Heart left ventricle (tissue), 16 donors: ENCODE measurements at regions of chr2 and their contacts with region 1.

Region 1: GRCh38 chr2:15636972-15637785 is 45.5 kb downstream of the DDX1 start:
- DNase-seq: peak in 3 of 5 donors; percentile 67 to 73 (median 71)
- ATAC-seq: peak; percentile 63 to 86 (median 85)
- H3K4me3 ChIP-seq: no peak overlapping the region
- H3K27ac ChIP-seq: peak overlapping the region in 1 of 12 donors; percentile 8
- H3K4me1 ChIP-seq: peaks cover 8 to 61% (median 29%) of the 10 kb centered on the region in 12 donors
- H3K27me3 ChIP-seq: no peaks in the 10 kb centered on the region
- CTCF ChIP-seq: peak; percentile 67 to 97 (median 90)
- POLR2A ChIP-seq: no peak

Region 2: DNA sequence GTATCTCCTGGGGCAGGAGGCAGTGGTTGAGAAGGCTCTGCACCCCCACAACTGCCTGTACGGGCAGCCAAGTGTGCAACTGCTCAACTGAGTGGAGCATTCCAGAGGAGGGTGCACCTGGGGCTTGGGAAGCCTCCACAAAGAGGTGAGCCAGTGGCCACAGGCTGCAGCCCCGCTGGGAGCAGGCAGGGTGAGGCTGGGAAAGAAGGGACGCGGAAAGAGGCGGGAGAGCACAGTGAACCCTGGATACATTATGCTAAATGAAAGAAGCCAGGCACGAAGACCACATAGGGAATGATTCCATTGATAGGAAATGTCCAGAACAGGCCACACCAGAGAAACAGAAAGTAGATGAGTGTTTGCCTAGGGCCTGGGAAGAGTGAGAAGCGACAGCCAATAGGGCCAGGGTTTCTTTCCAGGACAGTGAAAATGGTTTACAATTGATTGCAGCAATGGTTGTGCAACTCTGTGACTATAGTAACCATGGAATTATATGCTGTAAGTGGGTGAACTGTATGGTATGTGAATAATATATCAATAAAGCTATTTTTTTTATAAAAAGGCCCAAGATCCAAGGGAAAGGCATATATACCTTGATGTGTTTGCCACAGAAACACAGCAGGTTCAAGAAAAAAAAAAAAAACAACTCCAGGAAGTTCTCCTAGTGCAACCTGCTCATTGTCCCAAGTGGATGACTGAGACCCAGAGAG is 36.9 kb after region 1 on chr2:
- intact Hi-C with region 1: no loop called
- DNase-seq: no peak
- ATAC-seq: no peak
- H3K4me3 ChIP-seq: no peak overlapping the region
- H3K27ac ChIP-seq: no peak overlapping the region
- H3K4me1 ChIP-seq: peaks cover 0 to 7% (median 0%) of the 10 kb centered on the region in 12 donors
- H3K27me3 ChIP-seq: peaks cover 0 to 5% (median 0%) of the 10 kb centered on the region in 9 donors
- CTCF ChIP-seq: no peak
- POLR2A ChIP-seq: no peak

Region 3: GRCh38 chr2:15730545-15731212 is 93.5 kb after region 1 on chr2:
- intact Hi-C with region 1: loop called in 3 of 10 experiments (anchors 5 to 10 kb)
- DNase-seq: peak; percentile 92 to 97 (median 97)
- ATAC-seq: peak; percentile 87 to 96 (median 92)
- H3K4me3 ChIP-seq: no peak overlapping the region
- H3K27ac ChIP-seq: peak overlapping the region in 8 of 12 donors; percentile 0 to 67 (median 32)
- H3K4me1 ChIP-seq: peaks cover 9 to 59% (median 42%) of the 10 kb centered on the region in 12 donors
- H3K27me3 ChIP-seq: no peaks in the 10 kb centered on the region
- CTCF ChIP-seq: no peak
- POLR2A ChIP-seq: no peak

Region 4: GRCh38 chr2:15912205-15912604 is 275.0 kb after region 1 on chr2:
- intact Hi-C with region 1: loop called in 2 of 10 experiments (anchors 5 to 10 kb)
- DNase-seq: peak; percentile 71 to 82 (median 78)
- ATAC-seq: peak; percentile 72 to 86 (median 81)
- H3K4me3 ChIP-seq: no peak overlapping the region
- H3K27ac ChIP-seq: peak overlapping the region in 3 of 12 donors; percentile 7 to 23 (median 19)
- H3K4me1 ChIP-seq: peaks cover 0 to 36% (median 24%) of the 10 kb centered on the region in 12 donors
- H3K27me3 ChIP-seq: no peaks in the 10 kb centered on the region
- CTCF ChIP-seq: no peak
- POLR2A ChIP-seq: no peak

Region 5: GRCh38 chr2:16000642-16001041 is 363.5 kb after region 1 on chr2:
- intact Hi-C with region 1: no loop called
- DNase-seq: no peak
- ATAC-seq: no peak
- H3K4me3 ChIP-seq: no peak overlapping the region
- H3K27ac ChIP-seq: no peak overlapping the region
- H3K4me1 ChIP-seq: no peaks in the 10 kb centered on the region
- H3K27me3 ChIP-seq: peaks cover 0 to 9% (median 0%) of the 10 kb centered on the region in 9 donors
- CTCF ChIP-seq: no peak
- POLR2A ChIP-seq: no peak

Region 6: DNA sequence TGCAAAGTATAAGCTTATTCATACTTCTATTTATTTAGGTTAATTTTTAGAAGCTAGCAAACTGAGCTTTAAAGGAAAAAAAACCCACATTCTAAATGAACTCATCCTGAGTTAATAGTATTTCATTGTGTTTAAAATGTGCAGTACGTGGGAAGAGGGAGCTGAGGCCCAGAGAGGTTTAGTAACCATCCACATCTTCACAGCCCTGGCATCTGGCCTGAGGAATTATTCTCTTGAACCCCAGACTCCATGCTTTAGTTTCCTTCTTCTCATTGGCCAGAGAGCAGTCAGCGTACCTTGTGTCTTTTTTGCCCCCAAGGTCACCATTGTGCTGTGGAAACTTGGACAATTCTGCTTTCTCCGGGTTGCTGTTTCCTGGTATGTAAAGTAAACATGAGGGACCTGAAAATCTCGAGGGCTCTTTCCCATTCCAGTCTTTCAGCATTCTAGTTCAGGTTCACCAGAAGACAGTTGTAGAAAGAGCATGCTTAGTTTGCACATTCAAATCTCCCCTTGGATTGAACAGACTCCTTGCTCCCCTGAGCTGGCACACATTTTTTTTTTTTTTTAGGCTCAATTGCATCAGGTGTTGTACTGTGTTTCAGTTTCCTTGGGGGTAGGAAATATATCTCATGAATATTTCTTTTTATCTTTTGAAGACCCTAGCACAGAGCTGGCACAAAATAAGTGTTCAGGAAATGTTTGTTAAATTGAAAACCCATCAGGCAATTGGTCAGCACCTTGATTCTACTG is 384.6 kb after region 1 on chr2:
- intact Hi-C with region 1: no loop called
- DNase-seq: no peak
- ATAC-seq: no peak
- H3K4me3 ChIP-seq: no peak overlapping the region
- H3K27ac ChIP-seq: no peak overlapping the region
- H3K4me1 ChIP-seq: no peaks in the 10 kb centered on the region
- H3K27me3 ChIP-seq: peaks cover 0 to 27% (median 3%) of the 10 kb centered on the region in 9 donors
- CTCF ChIP-seq: no peak
- POLR2A ChIP-seq: no peak

Region 7: DNA sequence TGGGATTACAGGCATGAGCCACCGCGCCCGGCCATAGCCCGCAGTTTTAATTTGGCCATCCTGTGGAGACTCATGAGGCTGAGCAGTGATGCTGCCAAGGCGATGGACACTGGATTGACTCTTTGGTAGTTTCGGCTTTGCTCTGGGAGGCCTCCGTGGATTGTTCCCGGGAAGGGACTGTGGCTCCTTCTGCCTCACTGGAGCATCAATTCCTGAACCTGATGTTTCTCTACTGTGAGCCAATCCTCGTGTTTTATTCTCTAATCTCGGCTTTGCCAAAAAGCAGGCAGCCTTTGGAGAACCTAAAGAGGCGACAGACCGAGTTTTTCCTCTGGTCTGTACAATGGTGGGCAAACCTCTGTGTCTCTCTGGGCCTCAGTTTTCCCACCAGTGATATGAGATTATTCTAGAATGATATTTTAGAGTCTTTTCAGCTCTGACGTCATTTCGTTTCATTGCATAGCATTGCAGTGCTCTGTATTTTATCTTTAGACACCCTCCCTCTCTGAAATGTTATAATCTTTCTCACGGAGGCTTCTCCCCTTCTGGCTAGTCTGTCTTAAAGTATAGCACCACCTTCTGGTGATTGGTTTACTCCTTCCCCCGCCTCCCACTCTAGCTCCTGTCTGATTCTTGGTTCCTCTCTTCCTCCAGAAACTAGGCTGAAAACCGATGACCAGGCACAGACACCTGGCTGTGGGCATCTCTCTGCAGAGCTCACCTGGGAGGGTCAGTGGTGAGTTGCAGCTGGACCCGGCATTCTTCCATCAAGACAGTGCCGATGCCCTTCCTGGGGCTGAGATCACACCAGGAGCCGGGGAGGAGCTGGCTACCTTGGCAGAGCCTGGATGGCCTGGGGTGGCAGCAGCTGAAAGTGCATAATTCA is 644.5 kb after region 1 on chr2:
- intact Hi-C with region 1: loop called (anchors 2 to 5 kb)
- DNase-seq: peak in 1 of 5 donors; percentile 15
- ATAC-seq: peak; percentile 42 to 77 (median 69)
- H3K4me3 ChIP-seq: no peak overlapping the region
- H3K27ac ChIP-seq: no peak overlapping the region
- H3K4me1 ChIP-seq: no peaks in the 10 kb centered on the region
- H3K27me3 ChIP-seq: no peaks in the 10 kb centered on the region
- CTCF ChIP-seq: peak; percentile 2 to 70 (median 55)
- POLR2A ChIP-seq: no peak

Region 8: DNA sequence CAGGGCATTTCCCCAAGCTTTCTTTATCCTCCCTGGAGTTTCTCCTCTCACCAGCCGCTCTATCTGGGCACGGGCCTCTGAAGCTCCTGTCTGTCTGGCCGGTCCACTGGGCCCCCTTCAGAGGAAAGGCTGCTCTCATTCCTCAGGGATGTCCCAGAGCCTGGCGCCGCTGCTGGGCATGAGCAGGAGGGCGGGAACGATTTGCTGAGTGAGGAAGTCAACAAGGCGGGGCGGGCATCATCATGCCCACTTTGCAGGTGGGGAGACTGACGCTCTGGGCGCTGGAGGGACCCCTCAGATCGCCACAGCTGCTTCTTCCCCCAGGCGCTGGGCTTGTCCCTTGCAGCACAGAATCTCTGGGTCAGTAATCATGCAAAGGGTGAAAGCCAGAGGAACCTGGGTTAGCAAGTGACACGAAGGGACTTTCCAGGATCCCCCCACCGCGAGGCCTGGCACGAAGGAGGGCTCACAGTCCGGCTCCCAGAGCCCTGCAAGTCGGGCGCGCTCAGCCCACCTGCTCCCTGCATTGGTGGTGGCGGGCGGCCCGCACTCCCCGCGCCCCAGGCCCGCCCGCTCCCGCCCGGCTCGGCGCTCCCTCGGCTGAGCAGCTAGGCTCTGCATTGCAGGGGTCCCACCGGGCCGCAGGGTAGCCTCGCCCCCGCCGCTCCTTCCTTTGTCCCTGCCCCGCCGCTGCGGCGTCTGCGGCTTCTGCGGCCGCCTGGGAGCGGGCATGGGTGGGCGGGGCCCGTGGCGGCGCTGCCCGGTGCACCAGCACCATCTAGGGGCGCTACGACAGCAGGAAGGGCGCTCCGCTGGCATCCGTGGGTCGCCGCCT is 870.7 kb after region 1 on chr2:
- intact Hi-C with region 1: loop called in 8 of 10 experiments (anchors 2 to 5 kb)
- DNase-seq: peak; percentile 11 to 67 (median 42)
- ATAC-seq: peak; percentile 47 to 94 (median 84)
- H3K4me3 ChIP-seq: peak overlapping the region; percentile 19 to 53 (median 43)
- H3K27ac ChIP-seq: no peak overlapping the region
- H3K4me1 ChIP-seq: peaks cover 0 to 10% (median 4%) of the 10 kb centered on the region in 12 donors
- H3K27me3 ChIP-seq: peaks cover 7 to 48% (median 19%) of the 10 kb centered on the region in 9 donors
- CTCF ChIP-seq: peak; percentile 34 to 70 (median 60)
- POLR2A ChIP-seq: no peak

Region 9: DNA sequence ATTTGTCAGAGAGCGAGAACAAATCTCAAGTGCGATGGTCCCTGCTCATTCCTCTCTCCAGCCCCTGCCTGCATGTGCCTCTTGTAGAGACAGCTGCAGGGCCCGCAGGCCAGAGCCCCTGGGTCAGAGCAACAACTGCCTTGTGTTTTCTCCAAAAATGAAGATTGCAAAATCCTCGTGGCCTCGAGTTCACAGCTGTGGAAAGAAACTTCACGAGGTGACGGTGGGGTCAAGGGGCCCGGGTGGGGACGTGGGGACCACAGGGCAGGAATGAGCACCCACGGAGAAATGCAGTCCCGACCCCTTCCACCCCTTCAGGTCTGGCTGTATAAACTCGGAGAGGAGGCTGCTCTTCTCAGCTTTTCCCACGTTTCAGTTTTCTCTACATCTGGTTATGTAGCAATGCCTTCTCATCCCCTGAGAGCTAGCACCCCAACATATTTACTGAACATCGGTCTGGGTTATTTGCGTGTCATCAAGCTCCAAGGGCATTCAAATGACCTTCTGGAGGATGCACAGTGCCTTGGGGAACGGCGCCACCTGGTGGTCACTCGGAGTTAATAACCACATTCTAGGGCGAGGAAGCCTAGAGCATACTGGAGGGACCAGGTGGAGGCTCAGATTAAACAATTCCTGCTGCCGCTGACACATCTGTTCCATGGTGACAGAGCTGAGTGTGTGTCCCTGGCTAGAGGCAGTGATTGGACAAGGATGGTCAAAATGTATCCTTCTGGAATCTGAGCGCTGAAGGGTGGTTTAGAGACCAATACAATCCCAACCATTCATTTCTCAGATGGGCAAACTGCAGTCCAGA is 1119.9 kb after region 1 on chr2:
- intact Hi-C with region 1: loop called in 4 of 10 experiments (anchors 5 to 10 kb)
- DNase-seq: peak; percentile 71 to 87 (median 80)
- ATAC-seq: peak; percentile 81 to 93 (median 90)
- H3K4me3 ChIP-seq: no peak overlapping the region
- H3K27ac ChIP-seq: peak overlapping the region in 9 of 12 donors; percentile 12 to 60 (median 28)
- H3K4me1 ChIP-seq: peaks cover 0 to 22% (median 8%) of the 10 kb centered on the region in 12 donors
- H3K27me3 ChIP-seq: no peaks in the 10 kb centered on the region
- CTCF ChIP-seq: peak; percentile 84 to 95 (median 93)
- POLR2A ChIP-seq: no peak